A673 (cell line): ENCODE measurements at regions of chr4 and their contacts with region 1.

Region 1: DNA sequence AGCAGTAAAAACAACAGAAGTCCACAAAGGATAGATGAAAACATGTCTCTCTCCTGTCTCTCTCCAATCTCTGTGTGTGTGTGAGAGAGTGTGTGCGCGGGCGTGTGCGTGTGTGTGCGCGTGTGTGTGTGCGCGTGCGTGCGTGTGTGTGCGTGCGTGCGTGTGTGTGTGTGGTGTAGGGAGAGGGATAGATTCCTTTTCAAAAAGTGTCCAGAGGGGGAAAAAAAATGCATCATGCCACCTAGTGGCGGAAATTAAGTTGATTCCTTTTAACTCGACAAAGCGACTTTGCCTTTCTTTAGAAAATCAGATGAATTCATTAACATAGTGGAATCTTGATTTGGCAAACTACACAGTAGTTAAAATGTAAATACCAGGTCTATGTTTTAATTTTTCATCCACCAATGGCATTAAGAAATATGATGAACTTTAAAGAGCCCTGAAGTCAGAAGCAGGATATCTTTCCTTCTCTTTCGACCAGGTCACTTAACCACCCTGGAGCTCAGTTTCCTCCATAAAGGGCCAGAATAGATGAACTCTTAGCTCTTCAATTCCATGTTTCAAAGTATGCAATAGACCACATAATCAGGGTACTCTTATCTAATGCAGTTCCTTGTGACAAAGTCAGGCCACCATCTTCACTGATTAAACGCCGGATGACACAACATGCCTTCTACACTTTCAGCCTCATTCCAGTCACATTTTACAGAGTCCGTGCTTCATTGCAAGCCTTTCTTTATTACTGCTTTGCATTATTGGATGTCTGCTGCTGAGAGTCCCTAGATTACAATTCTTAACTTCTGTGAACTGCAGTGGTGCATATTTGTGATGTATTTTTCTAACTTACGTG is 162.8 kb downstream of the FBXO8 start:
- DNase-seq: peak; percentile 92
- H3K4me3 ChIP-seq: peak overlapping the region; percentile 46
- H3K27ac ChIP-seq: peak overlapping the region; percentile 11
- H3K4me1 ChIP-seq: peaks cover 22% of the 10 kb centered on the region
- H3K27me3 ChIP-seq: no peaks in the 10 kb centered on the region
- CTCF ChIP-seq: peak; percentile 68

Region 2: DNA sequence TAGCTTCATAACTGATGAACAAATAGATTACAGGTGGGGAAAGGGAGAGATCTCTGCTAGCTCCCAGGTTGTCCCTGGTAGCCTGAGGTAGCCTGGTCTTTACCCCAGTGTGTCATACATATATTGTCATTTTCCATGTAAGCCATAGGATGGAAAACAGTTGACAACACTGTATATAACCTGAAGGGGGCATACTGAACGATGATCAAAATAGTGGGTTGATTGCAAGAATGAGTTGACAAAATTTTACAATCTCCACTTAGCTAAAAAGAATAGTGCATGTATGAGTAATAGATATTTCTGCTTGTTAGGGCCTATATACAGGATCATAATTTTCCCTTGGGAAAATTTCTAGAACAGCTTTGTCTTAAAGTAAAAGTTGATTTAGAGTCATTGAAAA is 286.5 kb before region 1 on chr4:
- CTCF ChIA-PET with region 1: no interaction called
- POLR2A ChIA-PET with region 1: no interaction called
- intact Hi-C with region 1: loop called (anchors 5 kb)
- DNase-seq: peak; percentile 58
- H3K4me3 ChIP-seq: no peak overlapping the region
- H3K27ac ChIP-seq: no peak overlapping the region
- H3K4me1 ChIP-seq: peaks cover 7% of the 10 kb centered on the region
- H3K27me3 ChIP-seq: no peaks in the 10 kb centered on the region
- CTCF ChIP-seq: peak; percentile 54

Region 3: GRCh38 chr4:173990126-173990868 is 130.4 kb before region 1 on chr4:
- CTCF ChIA-PET with region 1: no interaction called
- POLR2A ChIA-PET with region 1: no interaction called
- intact Hi-C with region 1: loop called (anchors 5 kb)
- DNase-seq: peak; percentile 79
- H3K4me3 ChIP-seq: no peak overlapping the region
- H3K27ac ChIP-seq: peak overlapping the region; percentile 65
- H3K4me1 ChIP-seq: peaks cover 31% of the 10 kb centered on the region
- H3K27me3 ChIP-seq: no peaks in the 10 kb centered on the region
- CTCF ChIP-seq: peak; percentile 83

Region 4: GRCh38 chr4:174989791-174990190 is 869.1 kb after region 1 on chr4:
- CTCF ChIA-PET with region 1: no interaction called
- POLR2A ChIA-PET with region 1: no interaction called
- intact Hi-C with region 1: no loop called
- DNase-seq: no peak
- H3K4me3 ChIP-seq: no peak overlapping the region
- H3K27ac ChIP-seq: no peak overlapping the region
- H3K4me1 ChIP-seq: no peaks in the 10 kb centered on the region
- H3K27me3 ChIP-seq: no peaks in the 10 kb centered on the region
- CTCF ChIP-seq: no peak